ENCODE measurements at regions of chr11 and their contacts with region 1.

Region 1: GRCh38 chr11:111635706-111636045 is 33.4 kb downstream of the SIK2 start:
- DNase-seq: peak in 1 of 2 donors; percentile 12
- ATAC-seq: peak; percentile 71 to 89 (median 82)
- H3K4me3 ChIP-seq: no peak overlapping the region
- H3K27ac ChIP-seq: peak overlapping the region; percentile 65
- H3K4me1 ChIP-seq: peaks cover 65% of the 10 kb centered on the region
- H3K27me3 ChIP-seq: no peaks in the 10 kb centered on the region
- CTCF ChIP-seq: no peak

Region 2: DNA sequence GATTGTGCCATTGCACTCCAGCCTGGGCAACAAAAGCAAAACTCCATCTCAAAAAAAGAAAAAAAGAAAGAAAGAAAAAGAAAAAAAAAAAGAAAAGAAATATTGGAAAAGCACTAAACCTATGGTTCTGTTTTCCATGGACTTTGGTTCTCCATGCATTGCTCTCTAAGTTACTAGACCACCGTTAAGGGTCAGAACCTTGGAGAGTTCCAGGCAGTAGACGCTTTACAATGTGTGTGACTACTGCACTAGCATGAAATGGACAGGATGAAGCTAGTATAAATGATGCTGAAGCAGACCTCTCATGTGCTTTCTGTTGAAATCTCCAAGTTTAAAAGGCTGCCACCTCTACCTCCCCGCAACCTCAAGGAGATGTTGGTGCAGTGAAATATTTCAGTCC is 30.1 kb after region 1 on chr11:
- intact Hi-C with region 1: loop called (anchors 5 kb)
- DNase-seq: no peak
- ATAC-seq: peak in 2 of 4 donors; percentile 45 to 54
- H3K4me3 ChIP-seq: no peak overlapping the region
- H3K27ac ChIP-seq: no peak overlapping the region
- H3K4me1 ChIP-seq: peaks cover 7% of the 10 kb centered on the region
- H3K27me3 ChIP-seq: no peaks in the 10 kb centered on the region
- CTCF ChIP-seq: no peak

Region 3: GRCh38 chr11:111674941-111675340 is 39.3 kb after region 1 on chr11:
- intact Hi-C with region 1: loop called in 1 of 2 experiments (anchors 5 kb)
- DNase-seq: no peak
- ATAC-seq: peak in 1 of 4 donors; percentile 24
- H3K4me3 ChIP-seq: no peak overlapping the region
- H3K27ac ChIP-seq: no peak overlapping the region
- H3K4me1 ChIP-seq: peaks cover 19% of the 10 kb centered on the region
- H3K27me3 ChIP-seq: no peaks in the 10 kb centered on the region
- CTCF ChIP-seq: no peak

Measured in psoas muscle (tissue), 8 donors.